Activated CD4-positive, alpha-beta memory T cell treated with anti-CD3 and anti-CD28 coated beads for 36 hours (primary cell): ENCODE measurements at regions of chr1 and their contacts with region 1.

Region 1: DNA sequence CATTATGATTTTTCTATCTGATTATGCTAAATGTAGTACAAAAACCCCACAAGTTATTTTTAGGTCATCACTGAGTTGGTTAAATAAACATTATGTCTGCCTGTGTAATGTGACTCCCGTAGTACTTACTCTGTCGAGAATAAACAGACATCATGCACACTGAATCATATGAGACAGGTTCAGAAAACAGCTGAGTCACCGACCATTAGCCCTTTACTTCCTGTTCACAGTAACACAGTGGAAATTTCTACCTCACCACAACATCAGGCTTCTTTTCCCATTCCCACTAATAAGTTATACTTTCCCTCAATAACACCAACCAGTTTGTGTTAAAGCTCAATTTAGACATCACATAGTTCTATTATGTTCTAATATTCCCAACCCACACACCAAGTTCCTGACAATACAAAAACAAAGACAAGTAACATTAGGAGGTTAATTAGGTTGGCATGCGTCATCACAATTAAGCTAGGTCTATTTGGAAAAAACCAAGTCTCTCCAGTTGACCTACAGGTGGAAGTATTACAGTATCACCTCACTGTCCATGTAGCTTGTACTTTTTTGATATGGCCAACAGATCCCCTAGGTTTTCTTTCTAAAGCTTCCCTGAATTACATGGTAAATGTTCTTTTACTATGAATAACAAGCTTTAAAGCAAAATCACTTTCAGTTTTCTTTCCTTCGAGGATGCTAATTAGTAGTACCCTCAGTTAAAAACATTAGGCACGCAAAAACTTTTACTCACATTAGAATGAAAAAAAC is 154.2 kb downstream of the EIF4G3 start:
- DNase-seq: peak; percentile 29
- H3K4me3 Mint-ChIP-seq: peak overlapping the region; percentile 48
- H3K27ac Mint-ChIP-seq: peak overlapping the region; percentile 83
- H3K4me1 Mint-ChIP-seq: peaks cover 18% of the 10 kb centered on the region
- H3K27me3 Mint-ChIP-seq: no peaks in the 10 kb centered on the region

Region 2: GRCh38 chr1:20992322-20993056 is 30.0 kb before region 1 on chr1:
- CTCF ChIA-PET with region 1: no interaction called
- POLR2A ChIA-PET with region 1: no interaction called
- intact Hi-C with region 1: loop called (anchors 1 kb)
- DNase-seq: no peak
- H3K4me3 Mint-ChIP-seq: peak overlapping the region; percentile 40
- H3K27ac Mint-ChIP-seq: peak overlapping the region; percentile 75
- H3K4me1 Mint-ChIP-seq: peaks cover 24% of the 10 kb centered on the region
- H3K27me3 Mint-ChIP-seq: no peaks in the 10 kb centered on the region

Region 3: GRCh38 chr1:21042929-21043605 is 20.6 kb after region 1 on chr1:
- CTCF ChIA-PET with region 1: no interaction called
- POLR2A ChIA-PET with region 1: no interaction called
- intact Hi-C with region 1: no loop called
- DNase-seq: no peak
- H3K4me3 Mint-ChIP-seq: no peak overlapping the region
- H3K27ac Mint-ChIP-seq: no peak overlapping the region
- H3K4me1 Mint-ChIP-seq: no peaks in the 10 kb centered on the region
- H3K27me3 Mint-ChIP-seq: no peaks in the 10 kb centered on the region

Region 4: DNA sequence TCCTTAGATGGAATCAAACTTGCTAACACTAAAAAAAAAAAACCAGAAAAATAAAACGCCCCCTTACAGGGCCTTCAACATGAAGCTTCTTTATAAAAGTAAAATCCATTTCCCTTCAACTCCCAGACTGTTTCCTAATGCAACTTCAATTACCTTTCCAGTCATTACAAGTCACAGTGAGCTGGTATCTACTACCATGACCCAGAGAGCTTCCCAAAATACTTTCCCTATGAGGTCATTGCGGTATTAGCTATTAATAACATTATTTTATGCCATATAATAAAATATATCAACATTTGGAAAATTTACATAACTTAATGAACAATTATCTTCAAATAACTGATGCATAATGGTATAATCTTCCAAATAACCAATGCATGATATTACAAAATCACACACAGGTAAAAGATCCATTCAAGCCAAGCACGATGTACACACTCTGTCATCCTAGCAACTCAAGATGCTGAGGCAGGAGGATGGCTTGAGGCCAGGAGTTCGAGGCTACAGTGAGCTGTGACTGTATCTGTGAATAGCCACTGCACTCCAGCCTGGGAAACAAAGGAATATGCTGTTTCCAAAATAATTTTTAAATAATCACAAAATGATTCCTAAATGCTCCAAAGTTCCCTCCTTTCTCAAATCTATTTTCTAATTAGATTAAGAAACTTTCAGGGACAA is 130.1 kb after region 1 on chr1:
- CTCF ChIA-PET with region 1: no interaction called
- POLR2A ChIA-PET with region 1: no interaction called
- intact Hi-C with region 1: no loop called
- DNase-seq: no peak
- H3K4me3 Mint-ChIP-seq: no peak overlapping the region
- H3K27ac Mint-ChIP-seq: no peak overlapping the region
- H3K4me1 Mint-ChIP-seq: peaks cover 4% of the 10 kb centered on the region
- H3K27me3 Mint-ChIP-seq: no peaks in the 10 kb centered on the region

Region 5: DNA sequence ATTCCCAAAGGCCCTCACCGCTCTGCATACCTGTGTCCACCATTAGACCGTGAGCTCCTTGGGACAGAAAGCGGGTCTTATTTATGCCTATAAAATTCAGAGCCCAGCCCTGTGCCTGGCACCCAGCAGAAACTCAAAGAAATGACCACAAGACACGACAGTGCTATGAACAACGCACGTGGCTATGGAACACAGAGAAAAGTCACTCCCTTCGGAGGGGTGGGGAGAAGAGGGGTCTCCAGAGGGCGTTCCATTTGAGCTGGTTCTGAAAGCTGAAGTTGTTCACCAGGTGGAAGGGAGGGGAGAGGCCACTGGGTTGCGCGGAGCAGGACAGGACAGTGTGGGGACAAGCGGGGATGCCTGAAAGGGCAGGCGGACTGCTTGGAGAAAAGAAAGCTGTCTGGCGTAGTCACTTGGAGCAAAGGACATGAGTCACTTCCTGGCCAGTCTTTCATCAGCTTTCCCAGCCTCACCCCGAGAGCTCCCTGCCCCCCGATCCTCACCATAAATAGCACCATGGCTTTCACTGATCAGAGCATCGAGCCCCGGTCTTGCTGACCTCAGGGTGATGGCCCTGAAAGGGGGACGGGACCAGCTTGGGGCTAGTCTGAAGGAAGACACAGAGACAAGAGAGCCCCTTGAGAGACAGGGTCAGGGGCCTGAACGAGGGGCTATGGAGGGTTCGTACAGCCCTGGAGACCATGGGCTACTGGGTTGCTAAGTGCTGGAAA is 239.3 kb after region 1 on chr1:
- CTCF ChIA-PET with region 1: no interaction called
- POLR2A ChIA-PET with region 1: no interaction called
- intact Hi-C with region 1: no loop called
- DNase-seq: peak; percentile 65
- H3K4me3 Mint-ChIP-seq: no peak overlapping the region
- H3K27ac Mint-ChIP-seq: peak overlapping the region; percentile 91
- H3K4me1 Mint-ChIP-seq: peaks cover 61% of the 10 kb centered on the region
- H3K27me3 Mint-ChIP-seq: no peaks in the 10 kb centered on the region